Psoas muscle (tissue), 8 donors: ENCODE measurements at regions of chr2 and their contacts with region 1.

Region 1: GRCh38 chr2:105576440-105577252 is 168.1 kb upstream of the NCK2 start:
- DNase-seq: no peak
- ATAC-seq: peak; percentile 50 to 88 (median 60)
- H3K4me3 ChIP-seq: no peak overlapping the region
- H3K27ac ChIP-seq: no peak overlapping the region
- H3K4me1 ChIP-seq: no peaks in the 10 kb centered on the region
- H3K27me3 ChIP-seq: no peaks in the 10 kb centered on the region
- CTCF ChIP-seq: peak; percentile 64

Region 2: GRCh38 chr2:105744091-105744908 is 167.7 kb after region 1 on chr2:
- intact Hi-C with region 1: loop called in 1 of 2 experiments (anchors 10 kb)
- DNase-seq: peak; percentile 65 to 79
- ATAC-seq: peak; percentile 78 to 85 (median 82)
- H3K4me3 ChIP-seq: peak overlapping the region; percentile 81
- H3K27ac ChIP-seq: peak overlapping the region; percentile 86
- H3K4me1 ChIP-seq: peaks cover 36% of the 10 kb centered on the region
- H3K27me3 ChIP-seq: peaks cover 0 to 2% (median 0%) of the 10 kb centered on the region in 3 donors
- CTCF ChIP-seq: no peak

Region 3: GRCh38 chr2:106073678-106074406 is 497.2 kb after region 1 on chr2:
- intact Hi-C with region 1: loop called in 1 of 2 experiments (anchors 5 kb)
- DNase-seq: no peak
- ATAC-seq: peak; percentile 57 to 84 (median 76)
- H3K4me3 ChIP-seq: peak overlapping the region; percentile 20
- H3K27ac ChIP-seq: no peak overlapping the region
- H3K4me1 ChIP-seq: peaks cover 22% of the 10 kb centered on the region
- H3K27me3 ChIP-seq: no peaks in the 10 kb centered on the region
- CTCF ChIP-seq: no peak

Region 4: DNA sequence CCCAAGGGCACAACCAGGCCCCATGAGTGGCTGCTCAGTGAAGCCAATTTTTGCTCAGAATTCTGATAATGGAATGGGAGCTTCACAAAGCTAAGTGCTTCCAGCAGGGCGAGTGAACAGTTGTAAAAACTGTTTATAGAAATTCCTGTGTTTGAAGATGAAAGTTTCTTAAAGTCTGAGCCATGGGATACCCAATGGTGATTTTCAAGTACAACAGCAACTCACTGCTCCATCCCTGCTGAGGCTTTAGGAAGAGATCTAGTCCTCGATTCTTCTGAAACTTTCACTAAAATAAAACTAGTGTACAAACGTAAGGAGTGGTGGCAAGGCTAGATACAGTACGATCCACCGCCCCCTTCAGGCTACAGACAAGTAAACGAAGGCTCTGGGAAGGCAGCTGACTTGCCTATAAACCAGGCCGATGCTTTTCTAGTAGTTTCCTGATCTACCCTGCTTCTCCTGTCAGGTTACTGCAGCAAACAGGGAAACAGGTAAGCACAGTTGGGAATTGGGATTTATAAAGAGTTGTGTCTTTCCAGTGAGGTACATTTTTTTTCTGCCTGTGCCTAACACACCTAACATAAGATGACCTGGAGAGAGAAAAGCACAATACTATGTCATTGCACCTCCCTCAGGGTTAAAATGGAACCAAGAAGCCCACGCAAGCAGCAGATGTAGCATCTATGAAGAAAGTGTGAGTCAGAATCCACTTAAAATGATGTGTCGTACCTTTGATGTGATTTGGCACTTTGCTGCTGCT is 508.7 kb after region 1 on chr2:
- intact Hi-C with region 1: loop called (anchors 5 to 10 kb)
- DNase-seq: no peak
- ATAC-seq: peak in 3 of 4 donors; percentile 27 to 69 (median 59)
- H3K4me3 ChIP-seq: no peak overlapping the region
- H3K27ac ChIP-seq: no peak overlapping the region
- H3K4me1 ChIP-seq: no peaks in the 10 kb centered on the region
- H3K27me3 ChIP-seq: no peaks in the 10 kb centered on the region
- CTCF ChIP-seq: peak; percentile 27

Region 5: GRCh38 chr2:106098081-106098480 is 521.4 kb after region 1 on chr2:
- intact Hi-C with region 1: loop called in 1 of 2 experiments (anchors 10 kb)
- DNase-seq: no peak
- ATAC-seq: peak; percentile 24 to 89 (median 68)
- H3K4me3 ChIP-seq: no peak overlapping the region
- H3K27ac ChIP-seq: no peak overlapping the region
- H3K4me1 ChIP-seq: no peaks in the 10 kb centered on the region
- H3K27me3 ChIP-seq: no peaks in the 10 kb centered on the region
- CTCF ChIP-seq: peak; percentile 15